ENCODE measurements at regions of chr6 and their contacts with region 1.

Region 1: GRCh38 chr6:97394160-97394748 is 111.2 kb upstream of the MMS22L start:
- DNase-seq: peak; percentile 47
- ATAC-seq: 0 out of 2 replicates have a peak, but pooled peaks have one; percentile 63
- H3K4me3 ChIP-seq: no peak overlapping the region
- H3K27ac ChIP-seq: no peak overlapping the region
- H3K4me1 ChIP-seq: no peaks in the 10 kb centered on the region
- H3K27me3 ChIP-seq: no peaks in the 10 kb centered on the region; the same call in 1 of the 2 replicates
- CTCF ChIP-seq: peak; percentile 87

Region 2: GRCh38 chr6:97073903-97074302 is 320.4 kb before region 1 on chr6:
- CTCF ChIA-PET with region 1: no interaction called
- POLR2A ChIA-PET with region 1: no interaction called
- in situ Hi-C with region 1: no loop called
- intact Hi-C with region 1: loop called (anchors 2 kb)
- DNase-seq: no peak
- ATAC-seq: no peak
- H3K4me3 ChIP-seq: no peak overlapping the region
- H3K27ac ChIP-seq: no peak overlapping the region
- H3K4me1 ChIP-seq: no peaks in the 10 kb centered on the region
- H3K27me3 ChIP-seq: no peaks in the 10 kb centered on the region; the same call in 1 of the 2 replicates
- CTCF ChIP-seq: no peak

Region 3: DNA sequence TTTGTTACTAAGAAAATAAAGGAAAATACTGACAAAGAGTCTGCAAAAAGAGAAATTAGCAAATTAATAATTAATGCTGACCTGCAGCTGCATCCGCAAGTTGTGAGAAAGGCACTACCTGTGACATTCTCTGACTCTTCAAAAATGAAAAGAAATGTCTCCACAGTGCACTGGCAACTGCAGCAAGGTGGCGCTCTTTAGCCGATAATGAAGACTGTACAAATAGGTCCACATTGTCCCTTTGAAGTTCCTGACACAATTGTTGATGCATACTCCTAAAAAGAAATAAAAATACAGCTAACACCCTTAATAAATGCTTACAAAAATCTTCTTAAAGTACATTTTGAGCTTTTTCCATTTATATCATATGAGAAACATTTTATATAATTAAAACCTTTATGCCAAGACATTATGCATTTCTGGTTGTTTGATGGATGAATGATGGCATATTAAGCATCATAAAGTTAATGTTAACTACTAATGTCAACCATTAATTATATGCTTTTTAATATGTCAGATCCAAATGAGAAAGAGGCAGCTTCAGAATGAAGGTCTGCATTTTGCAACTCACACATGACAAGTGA is 207.7 kb before region 1 on chr6:
- CTCF ChIA-PET with region 1: no interaction called
- POLR2A ChIA-PET with region 1: no interaction called
- in situ Hi-C with region 1: no loop called
- intact Hi-C with region 1: loop called (anchors 1 kb)
- DNase-seq: peak; percentile 38
- ATAC-seq: peak; percentile 94
- H3K4me3 ChIP-seq: no peak overlapping the region
- H3K27ac ChIP-seq: no peak overlapping the region
- H3K4me1 ChIP-seq: no peaks in the 10 kb centered on the region
- H3K27me3 ChIP-seq: no peaks in the 10 kb centered on the region
- CTCF ChIP-seq: peak; percentile 94

Region 4: GRCh38 chr6:97215157-97215769 is 179.0 kb before region 1 on chr6:
- CTCF ChIA-PET with region 1: no interaction called
- POLR2A ChIA-PET with region 1: no interaction called
- in situ Hi-C with region 1: no loop called
- intact Hi-C with region 1: loop called (anchors 10 kb)
- DNase-seq: peak; percentile 22
- ATAC-seq: peak; percentile 69; the same call in 1 of the 2 replicates
- H3K4me3 ChIP-seq: no peak overlapping the region
- H3K27ac ChIP-seq: no peak overlapping the region
- H3K4me1 ChIP-seq: no peaks in the 10 kb centered on the region; the same call in 1 of the 2 replicates
- H3K27me3 ChIP-seq: no peaks in the 10 kb centered on the region
- CTCF ChIP-seq: peak; percentile 67

Region 5: DNA sequence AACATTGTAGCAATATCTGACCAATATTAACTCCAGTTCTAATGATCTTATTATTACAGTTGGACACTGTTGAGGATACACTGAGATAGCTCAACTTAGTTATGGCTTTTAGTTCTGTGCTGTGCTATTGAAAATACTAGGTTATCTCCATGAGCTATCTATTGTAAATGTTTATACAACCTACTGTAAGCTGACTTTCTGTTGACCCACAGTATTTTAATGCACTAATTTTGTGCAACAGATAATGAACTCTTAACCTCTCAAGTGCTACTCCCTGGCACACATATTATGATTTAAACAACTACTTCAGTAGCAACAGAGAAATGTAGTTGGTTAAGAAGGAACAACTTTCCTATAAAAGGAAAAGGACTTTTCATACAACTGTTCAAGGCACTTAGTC is 106.1 kb before region 1 on chr6:
- CTCF ChIA-PET with region 1: no interaction called
- POLR2A ChIA-PET with region 1: no interaction called
- in situ Hi-C with region 1: no loop called
- intact Hi-C with region 1: loop called (anchors 5 kb)
- DNase-seq: no peak
- ATAC-seq: no peak
- H3K4me3 ChIP-seq: no peak overlapping the region
- H3K27ac ChIP-seq: no peak overlapping the region
- H3K4me1 ChIP-seq: no peaks in the 10 kb centered on the region
- H3K27me3 ChIP-seq: no peaks in the 10 kb centered on the region
- CTCF ChIP-seq: no peak

Region 6: GRCh38 chr6:97586344-97586743 is 192.1 kb after region 1 on chr6:
- CTCF ChIA-PET with region 1: no interaction called
- POLR2A ChIA-PET with region 1: no interaction called
- in situ Hi-C with region 1: no loop called
- intact Hi-C with region 1: no loop called
- DNase-seq: no peak
- ATAC-seq: no peak
- H3K4me3 ChIP-seq: no peak overlapping the region
- H3K27ac ChIP-seq: no peak overlapping the region
- H3K4me1 ChIP-seq: no peaks in the 10 kb centered on the region
- H3K27me3 ChIP-seq: no peaks in the 10 kb centered on the region
- CTCF ChIP-seq: peak; percentile 23; the same call in 1 of the 2 replicates

Region 7: GRCh38 chr6:97621111-97621510 is 226.9 kb after region 1 on chr6:
- CTCF ChIA-PET with region 1: no interaction called
- POLR2A ChIA-PET with region 1: no interaction called
- in situ Hi-C with region 1: no loop called
- intact Hi-C with region 1: no loop called
- DNase-seq: no peak
- ATAC-seq: no peak
- H3K4me3 ChIP-seq: no peak overlapping the region
- H3K27ac ChIP-seq: no peak overlapping the region
- H3K4me1 ChIP-seq: no peaks in the 10 kb centered on the region
- H3K27me3 ChIP-seq: no peaks in the 10 kb centered on the region
- CTCF ChIP-seq: no peak

Measured in Panc1 (cell line).